ENCODE measurements at regions of chr14 and their contacts with region 1.

Region 1: DNA sequence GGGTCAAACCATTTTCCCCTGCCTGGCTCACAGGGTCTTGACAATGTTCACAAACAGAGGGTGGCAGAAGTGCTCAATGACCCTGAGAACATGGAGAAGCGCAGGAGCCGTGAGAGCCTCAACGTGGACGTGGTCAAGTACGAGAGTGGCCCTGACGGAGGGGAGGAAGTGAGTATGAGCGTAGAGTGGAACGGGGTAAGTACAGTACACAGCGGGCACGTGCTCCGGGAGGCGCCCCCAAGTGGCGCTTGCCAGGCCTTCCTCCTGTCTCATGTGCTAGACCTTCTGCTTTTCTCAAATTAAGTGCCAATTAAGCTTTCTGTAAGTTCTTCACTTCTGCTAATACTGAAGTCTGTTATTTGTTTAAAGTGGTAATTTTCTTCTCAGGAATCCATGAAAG is 35.9 kb downstream of the XRCC3 start:
- DNase-seq: peak; percentile 74
- H3K4me3 Mint-ChIP-seq: no peak overlapping the region
- H3K27ac Mint-ChIP-seq: peak overlapping the region; percentile 58
- H3K4me1 Mint-ChIP-seq: peaks cover 4% of the 10 kb centered on the region
- H3K27me3 Mint-ChIP-seq: no peaks in the 10 kb centered on the region

Region 2: GRCh38 chr14:103576371-103577024 is 102.9 kb before region 1 on chr14:
- intact Hi-C with region 1: loop called (anchors 1 kb)
- DNase-seq: no peak
- H3K4me3 Mint-ChIP-seq: no peak overlapping the region
- H3K27ac Mint-ChIP-seq: no peak overlapping the region
- H3K4me1 Mint-ChIP-seq: peaks cover 2% of the 10 kb centered on the region
- H3K27me3 Mint-ChIP-seq: no peaks in the 10 kb centered on the region

Measured in activated CD4-positive, alpha-beta T cell treated with anti-CD3 and anti-CD28 coated beads, Interleukin-2, amount 10 ng/mL, durations not matched to agents 24 days and 14 days (primary cell).